ENCODE measurements at regions of chr5 and their contacts with region 1.

Region 1: GRCh38 chr5:145681686-145682085 is 153.5 kb downstream of the PRELID2 start:
- DNase-seq: peak; percentile 75
- ATAC-seq: peak; percentile 99
- H3K4me3 ChIP-seq: no peak overlapping the region
- H3K27ac ChIP-seq: no peak overlapping the region
- H3K4me1 ChIP-seq: no peaks in the 10 kb centered on the region; a peak in 1 of 4 replicates
- H3K27me3 ChIP-seq: no peaks in the 10 kb centered on the region
- CTCF ChIP-seq: peak; percentile 81 to 93 (median 91)
- POLR2A ChIP-seq: no peak
- RAD21 ChIP-seq: peak; percentile 79

Region 2: GRCh38 chr5:144414193-144415029 is 1267.3 kb before region 1 on chr5:
- CTCF ChIA-PET with region 1: no interaction called
- POLR2A ChIA-PET with region 1: no interaction called
- RAD21 ChIA-PET with region 1: no interaction called
- intact Hi-C with region 1: no loop called
- DNase-seq: no peak
- ATAC-seq: no peak
- H3K4me3 ChIP-seq: no peak overlapping the region
- H3K27ac ChIP-seq: no peak overlapping the region
- H3K4me1 ChIP-seq: no peaks in the 10 kb centered on the region
- H3K27me3 ChIP-seq: peaks cover 3% of the 10 kb centered on the region; the same call in 1 of the 2 replicates
- CTCF ChIP-seq: no peak
- POLR2A ChIP-seq: no peak
- RAD21 ChIP-seq: no peak

Region 3: GRCh38 chr5:145668714-145669113 is 13.0 kb before region 1 on chr5:
- CTCF ChIA-PET with region 1: interaction called, 10 read pairs
- POLR2A ChIA-PET with region 1: interaction called, 3 read pairs
- RAD21 ChIA-PET with region 1: no interaction called
- intact Hi-C with region 1: no loop called
- DNase-seq: no peak
- ATAC-seq: no peak
- H3K4me3 ChIP-seq: no peak overlapping the region
- H3K27ac ChIP-seq: no peak overlapping the region
- H3K4me1 ChIP-seq: peaks cover 0 to 7% of the 10 kb centered on the region in 2 experiments; a peak in 1 of 4 replicates
- H3K27me3 ChIP-seq: no peaks in the 10 kb centered on the region
- CTCF ChIP-seq: no peak
- POLR2A ChIP-seq: no peak
- RAD21 ChIP-seq: no peak

Region 4: GRCh38 chr5:145811834-145812625 is 130.3 kb after region 1 on chr5:
- CTCF ChIA-PET with region 1: interaction called, 5 read pairs
- POLR2A ChIA-PET with region 1: no interaction called
- RAD21 ChIA-PET with region 1: no interaction called
- intact Hi-C with region 1: loop called (anchors 5 kb)
- DNase-seq: no peak
- ATAC-seq: peak; percentile 74
- H3K4me3 ChIP-seq: no peak overlapping the region
- H3K27ac ChIP-seq: no peak overlapping the region
- H3K4me1 ChIP-seq: no peaks in the 10 kb centered on the region
- H3K27me3 ChIP-seq: no peaks in the 10 kb centered on the region
- CTCF ChIP-seq: peak; percentile 9 to 19 (median 10); a peak in 1 of 6 replicates
- POLR2A ChIP-seq: no peak
- RAD21 ChIP-seq: peak; percentile 53

Region 5: GRCh38 chr5:145825751-145826180 is 144.1 kb after region 1 on chr5:
- CTCF ChIA-PET with region 1: interaction called, 6 read pairs
- POLR2A ChIA-PET with region 1: no interaction called
- RAD21 ChIA-PET with region 1: no interaction called
- intact Hi-C with region 1: loop called (anchors 2 kb)
- DNase-seq: peak; percentile 39
- ATAC-seq: peak; percentile 78
- H3K4me3 ChIP-seq: no peak overlapping the region
- H3K27ac ChIP-seq: no peak overlapping the region
- H3K4me1 ChIP-seq: peaks cover 7 to 10% of the 10 kb centered on the region in 2 experiments
- H3K27me3 ChIP-seq: no peaks in the 10 kb centered on the region
- CTCF ChIP-seq: peak; percentile 69 to 98 (median 89)
- POLR2A ChIP-seq: no peak
- RAD21 ChIP-seq: peak; percentile 73

Region 6: DNA sequence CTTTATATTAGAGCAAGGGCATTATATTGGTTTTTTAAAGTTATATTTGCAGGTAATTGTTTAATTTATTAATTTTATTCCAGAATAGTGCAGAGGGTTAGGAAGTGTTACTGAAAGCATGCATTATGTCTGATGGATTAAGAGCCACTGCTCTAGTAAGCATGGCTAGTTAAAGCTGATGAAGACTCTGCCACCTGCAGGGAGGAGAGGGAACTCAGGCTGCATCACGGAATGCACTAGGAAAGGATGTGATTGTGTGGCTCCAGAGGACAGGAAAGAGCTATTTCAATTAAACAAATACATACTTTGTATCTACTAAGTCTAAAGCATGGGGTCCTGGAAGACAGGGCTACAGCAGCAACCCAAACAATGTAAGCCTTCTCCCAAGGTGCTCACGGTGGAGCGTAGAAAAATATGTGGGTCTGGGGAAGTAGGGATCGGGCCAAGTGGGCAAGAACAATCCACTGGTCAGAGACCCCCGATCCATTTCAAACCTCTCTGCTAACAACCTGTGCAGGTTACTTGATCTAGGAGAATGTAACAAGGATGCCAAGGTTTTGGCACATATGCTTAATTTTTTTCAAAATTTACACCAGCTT is 206.4 kb after region 1 on chr5:
- CTCF ChIA-PET with region 1: interaction called, 5 read pairs
- POLR2A ChIA-PET with region 1: no interaction called
- RAD21 ChIA-PET with region 1: no interaction called
- intact Hi-C with region 1: loop called (anchors 2 kb)
- DNase-seq: peak; percentile 60
- ATAC-seq: peak; percentile 99
- H3K4me3 ChIP-seq: no peak overlapping the region
- H3K27ac ChIP-seq: no peak overlapping the region
- H3K4me1 ChIP-seq: no peaks in the 10 kb centered on the region
- H3K27me3 ChIP-seq: no peaks in the 10 kb centered on the region
- CTCF ChIP-seq: peak; percentile 78 to 96 (median 80)
- POLR2A ChIP-seq: no peak
- RAD21 ChIP-seq: peak; percentile 86

Region 7: GRCh38 chr5:146059460-146060220 is 378.0 kb after region 1 on chr5:
- CTCF ChIA-PET with region 1: no interaction called
- POLR2A ChIA-PET with region 1: no interaction called
- RAD21 ChIA-PET with region 1: no interaction called
- intact Hi-C with region 1: no loop called
- DNase-seq: no peak
- ATAC-seq: no peak
- H3K4me3 ChIP-seq: no peak overlapping the region
- H3K27ac ChIP-seq: no peak overlapping the region
- H3K4me1 ChIP-seq: no peaks in the 10 kb centered on the region
- H3K27me3 ChIP-seq: no peaks in the 10 kb centered on the region
- CTCF ChIP-seq: no peak
- POLR2A ChIP-seq: no peak
- RAD21 ChIP-seq: no peak

Measured in HCT116 (cell line).